BJ (cell line): ENCODE measurements at regions of chr5 and their contacts with region 1.

Region 1: GRCh38 chr5:142872795-142873194 is 102.6 kb downstream of the ARHGAP26 start:
- DNase-seq: no peak
- H3K4me3 ChIP-seq: no peak overlapping the region
- H3K27me3 ChIP-seq: peaks cover 9% of the 10 kb centered on the region
- CTCF ChIP-seq: no peak

Region 2: GRCh38 chr5:142852416-142853198 is 20.2 kb before region 1 on chr5:
- CTCF ChIA-PET with region 1: interaction called, 14 read pairs
- POLR2A ChIA-PET with region 1: no interaction called
- DNase-seq: no peak
- H3K4me3 ChIP-seq: no peak overlapping the region
- H3K27me3 ChIP-seq: no peaks in the 10 kb centered on the region
- CTCF ChIP-seq: no peak

Region 3: GRCh38 chr5:143066556-143067281 is 193.9 kb after region 1 on chr5:
- CTCF ChIA-PET with region 1: no interaction called
- POLR2A ChIA-PET with region 1: no interaction called
- DNase-seq: no peak
- H3K4me3 ChIP-seq: no peak overlapping the region
- H3K27me3 ChIP-seq: no peaks in the 10 kb centered on the region
- CTCF ChIP-seq: no peak